A549 (cell line): ENCODE measurements at regions of chr9 and their contacts with region 1.

Region 1: DNA sequence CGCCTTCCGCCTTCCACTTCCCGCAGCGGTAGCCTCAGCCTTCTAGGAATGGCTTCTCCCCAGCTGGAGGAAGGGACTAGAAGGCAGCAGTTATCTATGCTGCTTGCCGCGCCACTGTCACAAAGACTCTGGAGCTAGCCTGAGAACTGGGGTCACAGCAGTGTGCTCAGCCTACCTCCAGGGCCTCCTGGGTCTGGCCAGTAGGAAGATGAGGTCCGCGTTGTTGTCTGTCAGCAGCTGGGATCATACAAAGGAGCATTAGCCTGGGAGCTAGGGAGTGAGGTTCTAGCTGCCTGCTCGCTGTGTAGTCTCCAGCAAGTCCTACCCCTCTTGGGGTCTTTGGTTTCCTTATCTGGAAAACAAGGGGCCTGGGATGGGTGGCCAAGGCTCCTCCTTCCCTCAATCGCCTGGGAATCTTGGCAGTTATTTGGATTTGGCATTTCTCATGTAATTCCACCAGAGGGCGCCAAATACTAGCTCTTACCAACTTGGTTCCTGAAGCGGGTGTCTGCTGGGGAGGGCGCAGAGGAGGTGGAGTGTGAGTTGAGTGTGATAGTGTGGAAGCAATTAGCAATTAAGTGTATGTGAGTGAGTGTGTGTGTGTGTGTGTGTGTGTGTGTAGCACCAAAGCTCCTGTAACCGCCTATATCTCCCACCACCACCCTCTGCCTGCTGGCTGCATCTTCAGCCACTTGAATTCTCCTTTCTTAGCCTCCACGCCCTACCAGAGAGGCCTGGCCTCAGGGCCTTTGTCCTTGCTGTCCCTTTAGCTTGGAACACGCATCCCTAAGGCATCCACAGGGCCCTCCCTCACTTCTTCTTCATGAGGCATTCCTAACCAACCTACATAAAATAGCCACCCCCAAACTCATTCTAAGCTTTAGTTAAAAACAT is 97.1 kb downstream of the ENTREP1 start:
- DNase-seq: peak; percentile 60 to 62
- ATAC-seq: peak; percentile 77 to 91; a peak in 5 of 6 replicates
- H3K4me3 ChIP-seq: no peak overlapping the region
- H3K27ac ChIP-seq: no peak overlapping the region
- H3K4me1 ChIP-seq: no peaks in the 10 kb centered on the region
- CTCF ChIP-seq: peak; percentile 84
- EP300 ChIP-seq: no peak
- POLR2A ChIP-seq: no peak
- RAD21 ChIP-seq: peak; percentile 93

Region 2: DNA sequence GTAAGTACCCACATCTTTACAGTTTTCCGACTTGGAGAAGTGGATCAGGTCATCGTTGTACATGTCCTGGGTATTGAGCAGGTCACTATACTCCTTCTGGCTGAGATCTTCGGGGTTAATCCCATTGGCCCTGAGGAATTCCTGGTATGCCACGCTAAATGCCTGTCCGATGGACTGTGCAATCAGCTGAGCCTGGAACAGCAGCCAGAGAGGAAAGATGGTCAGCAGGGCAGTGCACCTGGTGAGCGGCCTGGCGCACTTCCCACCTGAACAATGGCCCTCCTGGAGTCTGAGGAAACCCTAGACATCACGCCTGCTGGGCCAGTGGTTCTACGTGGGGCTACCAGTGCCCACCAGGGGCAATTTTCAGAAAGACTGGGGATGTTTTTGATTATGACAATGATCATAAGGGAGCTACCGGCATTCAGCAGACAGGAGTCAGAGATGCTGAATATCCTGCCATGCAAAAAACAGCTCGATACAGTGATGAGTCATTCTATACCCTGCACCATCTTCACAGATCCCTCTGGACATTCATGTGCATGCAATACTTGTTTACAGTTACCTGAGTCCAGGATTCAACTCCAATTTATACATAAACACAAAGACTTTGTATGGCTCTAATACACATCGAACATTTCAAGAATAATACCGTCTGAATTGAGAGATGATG is 30.1 kb after region 1 on chr9:
- CTCF ChIA-PET with region 1: interaction called, 11 read pairs
- POLR2A ChIA-PET with region 1: no interaction called
- DNase-seq: no peak
- ATAC-seq: no peak
- H3K4me3 ChIP-seq: no peak overlapping the region
- H3K27ac ChIP-seq: no peak overlapping the region
- H3K4me1 ChIP-seq: no peaks in the 10 kb centered on the region
- CTCF ChIP-seq: no peak
- EP300 ChIP-seq: no peak
- POLR2A ChIP-seq: no peak
- RAD21 ChIP-seq: no peak

Region 3: DNA sequence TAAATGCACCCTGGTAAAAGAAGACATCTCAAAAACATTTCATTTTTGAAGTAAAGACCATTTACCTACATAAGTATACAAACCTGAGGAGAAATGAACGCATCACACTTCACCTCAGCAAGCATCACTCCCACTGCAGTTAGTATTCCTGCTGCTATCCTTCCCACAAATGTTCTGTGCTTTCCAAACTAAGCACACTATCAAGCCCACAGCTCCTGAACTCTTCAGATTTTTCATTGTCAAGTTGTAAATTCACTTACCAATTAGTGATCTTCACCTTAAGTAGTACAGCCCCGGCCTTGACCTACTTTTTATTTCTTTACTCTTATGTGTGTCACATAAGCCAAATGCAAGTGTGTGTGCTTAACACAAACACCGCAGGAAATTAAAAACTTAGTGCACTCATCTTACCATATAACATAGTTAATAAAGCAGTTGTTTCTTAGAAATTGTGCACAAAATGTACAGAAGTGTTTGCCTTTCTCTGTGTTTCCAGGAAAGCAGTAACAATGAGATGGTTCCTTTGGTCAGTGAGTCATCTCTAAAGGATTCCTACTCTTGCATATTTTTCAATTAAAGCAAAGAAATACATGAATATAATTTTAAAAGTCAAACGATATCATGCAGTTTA is 80.6 kb after region 1 on chr9:
- CTCF ChIA-PET with region 1: no interaction called
- POLR2A ChIA-PET with region 1: no interaction called
- DNase-seq: no peak
- ATAC-seq: no peak
- H3K4me3 ChIP-seq: no peak overlapping the region
- H3K27ac ChIP-seq: no peak overlapping the region
- H3K4me1 ChIP-seq: no peaks in the 10 kb centered on the region
- CTCF ChIP-seq: no peak
- EP300 ChIP-seq: no peak
- POLR2A ChIP-seq: no peak
- RAD21 ChIP-seq: no peak

Region 4: GRCh38 chr9:69549310-69550202 is 127.4 kb after region 1 on chr9:
- CTCF ChIA-PET with region 1: interaction called, 58 read pairs
- POLR2A ChIA-PET with region 1: no interaction called
- DNase-seq: peak; percentile 21 to 49
- ATAC-seq: peak; percentile 47 to 71; a peak in 4 of 6 replicates
- H3K4me3 ChIP-seq: no peak overlapping the region
- H3K27ac ChIP-seq: no peak overlapping the region
- H3K4me1 ChIP-seq: no peaks in the 10 kb centered on the region
- CTCF ChIP-seq: peak; percentile 71
- EP300 ChIP-seq: no peak
- POLR2A ChIP-seq: no peak
- RAD21 ChIP-seq: peak; percentile 71 to 74

Region 5: GRCh38 chr9:69919461-69920061 is 497.4 kb after region 1 on chr9:
- CTCF ChIA-PET with region 1: interaction called, 48 read pairs
- POLR2A ChIA-PET with region 1: no interaction called
- DNase-seq: peak; percentile 42 to 59
- ATAC-seq: peak; percentile 91 to 97
- H3K4me3 ChIP-seq: no peak overlapping the region
- H3K27ac ChIP-seq: no peak overlapping the region
- H3K4me1 ChIP-seq: no peaks in the 10 kb centered on the region
- CTCF ChIP-seq: peak; percentile 83
- EP300 ChIP-seq: no peak
- POLR2A ChIP-seq: no peak
- RAD21 ChIP-seq: peak; percentile 78 to 80

Region 6: GRCh38 chr9:69936427-69936826 is 514.3 kb after region 1 on chr9:
- CTCF ChIA-PET with region 1: interaction called, 45 read pairs
- POLR2A ChIA-PET with region 1: no interaction called
- DNase-seq: peak in 1 of 2 experiments; percentile 20
- ATAC-seq: peak; percentile 43 to 44; a peak in 1 of 6 replicates
- H3K4me3 ChIP-seq: no peak overlapping the region
- H3K27ac ChIP-seq: no peak overlapping the region
- H3K4me1 ChIP-seq: 0 out of 3 replicates have a peak, but pooled peaks cover 3% of the 10 kb centered on the region
- CTCF ChIP-seq: no peak
- EP300 ChIP-seq: no peak
- POLR2A ChIP-seq: no peak
- RAD21 ChIP-seq: no peak